Right cardiac atrium (tissue), 5 donors: ENCODE measurements at regions of chr19 and their contacts with region 1.

Region 1: DNA sequence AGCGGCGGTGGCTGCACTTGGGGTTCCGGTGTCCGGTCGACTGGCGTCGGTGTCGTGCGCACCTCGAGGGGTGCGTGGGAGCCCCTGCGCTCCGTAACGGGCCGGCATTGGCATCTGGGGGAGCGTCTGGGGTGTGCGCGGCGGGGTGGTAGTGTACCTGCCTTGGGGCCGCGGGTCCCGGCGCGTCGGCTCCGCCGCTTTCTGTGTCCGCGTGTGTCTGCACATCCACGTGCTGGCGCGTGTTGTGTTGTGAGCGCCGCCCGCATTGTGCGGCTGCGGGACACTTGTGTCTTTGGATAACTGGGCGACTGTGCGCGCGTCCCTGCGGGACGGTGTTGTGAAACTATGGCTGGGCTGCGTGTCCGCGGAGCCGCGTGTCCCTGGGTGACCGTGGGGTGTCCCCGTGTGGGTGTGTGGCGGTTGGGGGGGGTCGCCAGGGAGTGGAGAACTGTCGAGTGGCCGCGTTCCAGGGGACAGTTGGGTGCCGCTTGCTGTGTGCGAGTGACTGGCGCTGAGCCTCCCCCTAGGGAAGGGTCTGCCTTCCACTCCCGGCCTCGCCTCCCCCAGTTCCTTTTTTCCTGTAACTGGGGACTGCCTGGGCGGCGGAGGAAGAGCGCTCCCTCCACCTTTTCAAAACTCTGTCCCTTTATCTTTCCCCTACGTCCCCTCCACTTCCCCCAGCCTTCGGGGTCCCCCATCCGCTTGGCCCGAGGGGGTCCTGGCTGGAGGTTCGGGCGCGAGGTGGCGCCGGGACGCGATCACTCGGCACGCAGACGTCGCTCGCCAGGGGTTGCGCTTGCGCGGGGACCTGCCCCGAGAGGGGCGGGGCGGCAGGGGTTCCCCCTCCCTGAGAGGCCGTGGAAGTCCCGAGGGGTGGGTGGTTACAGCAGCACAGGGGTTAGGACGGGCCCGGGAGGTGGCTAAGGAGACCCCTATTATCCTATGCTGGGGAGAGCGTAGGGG is 5.7 kb upstream of the NFIC start:
- DNase-seq: peak; percentile 75 to 94 (median 94)
- ATAC-seq: peak; percentile 63 to 70
- H3K4me3 ChIP-seq: peak overlapping the region; percentile 99
- H3K27ac ChIP-seq: peak overlapping the region; percentile 88
- H3K4me1 ChIP-seq: peaks cover 8% of the 10 kb centered on the region
- H3K27me3 ChIP-seq: no peaks in the 10 kb centered on the region

Region 2: GRCh38 chr19:3319643-3320353 is 40.9 kb before region 1 on chr19:
- intact Hi-C with region 1: no loop called
- DNase-seq: peak in 1 of 3 donors; percentile 37
- ATAC-seq: no peak
- H3K4me3 ChIP-seq: no peak overlapping the region
- H3K27ac ChIP-seq: no peak overlapping the region
- H3K4me1 ChIP-seq: no peaks in the 10 kb centered on the region
- H3K27me3 ChIP-seq: no peaks in the 10 kb centered on the region

Region 3: GRCh38 chr19:3403489-3404323 is 43.0 kb after region 1 on chr19:
- intact Hi-C with region 1: loop called in 2 of 4 experiments (anchors 5 kb)
- DNase-seq: peak; percentile 94 to 97 (median 96)
- ATAC-seq: peak; percentile 78 to 84
- H3K4me3 ChIP-seq: peak overlapping the region; percentile 13
- H3K27ac ChIP-seq: peak overlapping the region; percentile 99
- H3K4me1 ChIP-seq: peaks cover 9% of the 10 kb centered on the region
- H3K27me3 ChIP-seq: no peaks in the 10 kb centered on the region